B cell (primary cell): ENCODE measurements at regions of chr7 and their contacts with region 1.

Region 1: GRCh38 chr7:148242294-148242801 is 348.2 kb upstream of the C7orf33 start:
- DNase-seq: peak; percentile 45
- ATAC-seq: peak; percentile 28
- H3K4me3 ChIP-seq: no peak overlapping the region
- H3K4me3 Mint-ChIP-seq: no peak overlapping the region
- H3K27ac ChIP-seq: no peak overlapping the region
- H3K27ac Mint-ChIP-seq: no peak overlapping the region
- H3K4me1 ChIP-seq: peaks cover 3 to 4% of the 10 kb centered on the region in 2 donors
- H3K4me1 Mint-ChIP-seq: peaks cover 5% of the 10 kb centered on the region
- H3K27me3 ChIP-seq: peaks cover 0 to 20% (median 14%) of the 10 kb centered on the region in 4 experiments
- H3K27me3 Mint-ChIP-seq: peaks cover 43% of the 10 kb centered on the region
- CTCF ChIP-seq: peak; percentile 82

Region 2: GRCh38 chr7:147570390-147570789 is 672.0 kb before region 1 on chr7:
- CTCF ChIA-PET with region 1: no interaction called
- POLR2A ChIA-PET with region 1: no interaction called
- intact Hi-C with region 1: no loop called
- DNase-seq: no peak
- ATAC-seq: no peak
- H3K4me3 ChIP-seq: no peak overlapping the region
- H3K4me3 Mint-ChIP-seq: no peak overlapping the region
- H3K27ac ChIP-seq: no peak overlapping the region
- H3K27ac Mint-ChIP-seq: no peak overlapping the region
- H3K4me1 ChIP-seq: no peaks in the 10 kb centered on the region
- H3K4me1 Mint-ChIP-seq: no peaks in the 10 kb centered on the region
- H3K27me3 ChIP-seq: no peaks in the 10 kb centered on the region
- H3K27me3 Mint-ChIP-seq: no peaks in the 10 kb centered on the region
- CTCF ChIP-seq: no peak

Region 3: DNA sequence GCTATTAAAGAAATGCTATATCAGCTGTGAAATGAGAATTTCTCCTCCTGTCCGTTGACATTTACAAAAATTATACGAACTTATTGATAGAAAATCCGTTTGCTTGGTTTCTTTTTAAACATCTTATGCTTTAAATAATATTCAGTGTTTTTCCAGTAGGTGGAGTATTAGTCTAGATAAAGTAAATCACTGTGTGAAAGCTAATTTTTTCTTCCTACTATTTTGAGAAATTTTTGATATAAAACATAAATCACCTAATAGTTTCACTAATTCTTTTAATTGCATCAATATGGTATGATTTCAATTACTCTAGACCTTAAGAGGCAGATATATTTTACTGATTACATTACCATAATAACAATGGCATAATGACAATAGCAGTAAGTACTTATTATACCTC is 13.0 kb after region 1 on chr7:
- CTCF ChIA-PET with region 1: interaction called, 64 read pairs
- POLR2A ChIA-PET with region 1: no interaction called
- intact Hi-C with region 1: no loop called
- DNase-seq: no peak
- ATAC-seq: no peak
- H3K4me3 ChIP-seq: no peak overlapping the region
- H3K4me3 Mint-ChIP-seq: no peak overlapping the region
- H3K27ac ChIP-seq: no peak overlapping the region
- H3K27ac Mint-ChIP-seq: no peak overlapping the region
- H3K4me1 ChIP-seq: no peaks in the 10 kb centered on the region
- H3K4me1 Mint-ChIP-seq: peaks cover 3% of the 10 kb centered on the region
- H3K27me3 ChIP-seq: peaks cover 0 to 8% (median 2%) of the 10 kb centered on the region in 4 experiments
- H3K27me3 Mint-ChIP-seq: peaks cover 37% of the 10 kb centered on the region
- CTCF ChIP-seq: peak; percentile 58